CD8-positive, alpha-beta T cell (primary cell): ENCODE measurements at regions of chr19 and their contacts with region 1.

Region 1: DNA sequence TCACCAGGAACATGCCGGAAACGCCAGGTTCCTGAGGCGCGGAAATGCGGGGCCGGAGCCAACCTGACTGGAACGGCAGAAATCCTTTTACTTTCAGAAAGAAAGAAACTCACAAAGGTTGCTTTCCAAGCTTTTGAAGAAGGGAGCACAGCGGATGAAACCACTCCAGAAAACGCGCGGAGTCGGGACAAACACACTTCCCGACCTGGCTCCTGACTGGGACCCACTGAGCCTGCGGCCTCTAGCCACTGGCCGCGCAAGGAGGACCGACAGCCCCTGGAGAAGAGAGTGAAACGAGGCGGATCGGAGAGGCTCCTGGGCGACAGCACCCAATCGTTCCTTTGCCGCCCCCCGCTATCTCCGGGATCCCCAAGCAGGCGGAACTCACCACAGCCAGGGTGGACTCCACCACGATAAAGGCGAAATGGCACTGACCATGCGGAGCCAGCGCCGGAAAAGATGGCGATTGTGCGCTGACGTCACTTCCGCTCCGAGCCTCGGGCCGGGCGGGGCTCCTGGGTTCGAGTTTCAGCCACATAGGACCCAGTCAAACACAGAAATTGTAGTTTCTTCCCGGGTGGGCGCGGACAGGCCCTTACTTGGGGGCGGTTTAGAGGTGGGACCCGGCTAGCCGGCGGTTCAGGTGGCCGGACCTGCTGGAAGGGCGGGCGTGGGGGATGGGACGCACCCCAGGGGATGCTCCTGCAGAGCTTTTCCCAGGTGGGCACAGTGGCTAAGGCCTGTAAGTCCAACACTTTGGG is at the start of gene ZNF121:
- DNase-seq: peak; percentile 57 to 89 (median 81)
- ATAC-seq: peak; percentile 75
- H3K4me3 ChIP-seq: peak within 1 kb of the TSS; percentile 95 to 98
- H3K4me3 Mint-ChIP-seq: peak within 1 kb of the TSS; percentile 95
- H3K27ac ChIP-seq: peak within 1 kb of the TSS; percentile 96 to 97
- H3K27ac Mint-ChIP-seq: peak within 1 kb of the TSS; percentile 95
- H3K4me1 ChIP-seq: peaks cover 21% of the 10 kb centered on the region
- H3K4me1 Mint-ChIP-seq: peaks cover 39% of the 10 kb centered on the region
- H3K27me3 ChIP-seq: no peaks in the 10 kb centered on the region
- H3K27me3 Mint-ChIP-seq: peaks cover 2% of the 10 kb centered on the region
- CTCF ChIP-seq: no peak
- total RNA-seq, gene ZNF121: 40.6 to 43.2 TPM

Region 2: GRCh38 chr19:8897106-8897505 is 687.1 kb before region 1 on chr19:
- CTCF ChIA-PET with region 1: no interaction called
- POLR2A ChIA-PET with region 1: no interaction called
- intact Hi-C with region 1: no loop called
- DNase-seq: no peak
- ATAC-seq: no peak
- H3K4me3 ChIP-seq: no peak overlapping the region
- H3K4me3 Mint-ChIP-seq: no peak overlapping the region
- H3K27ac ChIP-seq: no peak overlapping the region
- H3K27ac Mint-ChIP-seq: no peak overlapping the region
- H3K4me1 ChIP-seq: no peaks in the 10 kb centered on the region
- H3K4me1 Mint-ChIP-seq: no peaks in the 10 kb centered on the region
- H3K27me3 ChIP-seq: no peaks in the 10 kb centered on the region
- H3K27me3 Mint-ChIP-seq: no peaks in the 10 kb centered on the region
- CTCF ChIP-seq: no peak

Region 3: DNA sequence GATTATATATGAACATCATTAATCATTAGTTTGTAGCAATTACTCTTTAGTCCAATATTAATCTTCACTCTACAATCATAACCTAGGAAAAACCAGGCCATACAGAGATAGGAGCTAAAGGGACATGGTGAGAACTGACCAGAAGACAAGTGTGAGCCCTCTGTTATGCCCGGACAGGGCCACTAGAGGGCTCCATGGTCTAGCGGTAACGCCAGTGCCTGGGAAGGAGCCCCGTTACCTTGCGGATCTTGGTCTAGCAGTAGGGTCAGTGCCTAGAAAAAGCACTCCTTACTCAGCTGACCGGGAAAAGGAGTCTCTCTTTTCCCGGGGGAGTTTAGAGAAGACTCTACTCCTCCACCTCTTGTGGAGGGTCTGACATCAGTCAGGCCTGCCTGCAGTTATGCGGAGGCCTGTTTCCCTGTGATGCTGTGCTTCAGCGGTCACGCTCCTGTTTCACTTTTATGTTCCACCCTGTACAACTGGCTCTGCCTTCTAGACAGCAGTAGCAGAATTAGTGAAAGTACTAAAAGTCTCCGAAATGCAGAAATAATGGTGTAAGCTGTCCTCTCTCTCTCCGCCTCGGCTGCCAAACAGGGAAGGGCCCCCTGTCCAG is 378.6 kb before region 1 on chr19:
- CTCF ChIA-PET with region 1: interaction called, 5 read pairs
- POLR2A ChIA-PET with region 1: no interaction called
- intact Hi-C with region 1: loop called (anchors 1 to 5 kb)
- DNase-seq: peak; percentile 32 to 79 (median 65)
- ATAC-seq: peak; percentile 71
- H3K4me3 ChIP-seq: peak overlapping the region in 1 of 2 experiments; percentile 32
- H3K4me3 Mint-ChIP-seq: peak overlapping the region; percentile 60
- H3K27ac ChIP-seq: no peak overlapping the region
- H3K27ac Mint-ChIP-seq: no peak overlapping the region
- H3K4me1 ChIP-seq: no peaks in the 10 kb centered on the region
- H3K4me1 Mint-ChIP-seq: peaks cover 6% of the 10 kb centered on the region
- H3K27me3 ChIP-seq: no peaks in the 10 kb centered on the region
- H3K27me3 Mint-ChIP-seq: peaks cover 8% of the 10 kb centered on the region
- CTCF ChIP-seq: peak; percentile 98

Region 4: DNA sequence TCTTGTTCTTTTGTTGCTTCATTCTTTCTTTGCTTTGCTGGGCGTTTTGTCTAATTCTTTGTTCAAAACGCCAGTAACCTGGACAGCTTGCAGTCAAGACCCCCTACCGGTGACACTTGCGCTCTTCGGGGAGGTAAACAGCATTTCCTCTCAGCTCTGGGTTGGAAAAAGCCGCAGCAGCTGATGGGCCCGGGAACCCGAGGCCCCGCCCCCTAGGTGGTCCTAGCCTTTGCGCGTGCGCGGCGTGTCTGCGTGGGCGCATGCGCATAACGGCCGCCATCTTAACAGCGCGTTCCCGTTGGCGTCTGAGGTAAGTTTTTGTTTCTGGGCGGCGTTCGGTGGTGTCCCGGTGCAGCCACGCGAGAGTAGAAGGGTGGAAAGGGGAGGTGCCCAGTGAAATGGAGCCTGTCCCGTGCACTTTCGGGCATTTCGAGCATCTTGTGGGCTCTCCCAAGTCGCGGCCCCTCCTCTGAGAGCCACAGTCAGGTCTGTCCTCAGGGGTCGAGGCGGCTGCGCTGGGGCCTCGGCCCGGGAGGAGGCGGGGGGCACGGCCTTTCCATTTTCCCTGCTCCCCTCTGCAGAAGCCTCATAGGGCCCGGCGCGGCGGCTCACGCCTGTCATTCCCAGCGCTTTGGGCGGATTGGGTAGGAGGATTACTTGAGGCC is 260.2 kb before region 1 on chr19 and contains the start of gene ZNF559:
- CTCF ChIA-PET with region 1: no interaction called
- POLR2A ChIA-PET with region 1: interaction called, 6 read pairs
- intact Hi-C with region 1: loop called in 1 of 2 experiments (anchors 1 kb)
- DNase-seq: peak; percentile 95 to 99 (median 98)
- ATAC-seq: peak; percentile 95
- H3K4me3 ChIP-seq: peak within 1 kb of the TSS; percentile 75 to 78
- H3K4me3 Mint-ChIP-seq: peak within 1 kb of the TSS; percentile 88
- H3K27ac ChIP-seq: peak within 1 kb of the TSS; percentile 62 to 83
- H3K27ac Mint-ChIP-seq: peak within 1 kb of the TSS; percentile 87
- H3K4me1 ChIP-seq: peaks cover 12% of the 10 kb centered on the region
- H3K4me1 Mint-ChIP-seq: peaks cover 38% of the 10 kb centered on the region
- H3K27me3 ChIP-seq: no peaks in the 10 kb centered on the region
- H3K27me3 Mint-ChIP-seq: no peaks in the 10 kb centered on the region
- CTCF ChIP-seq: peak; percentile 39
- total RNA-seq, gene ZNF559: 4.0 to 4.5 TPM

Region 5: DNA sequence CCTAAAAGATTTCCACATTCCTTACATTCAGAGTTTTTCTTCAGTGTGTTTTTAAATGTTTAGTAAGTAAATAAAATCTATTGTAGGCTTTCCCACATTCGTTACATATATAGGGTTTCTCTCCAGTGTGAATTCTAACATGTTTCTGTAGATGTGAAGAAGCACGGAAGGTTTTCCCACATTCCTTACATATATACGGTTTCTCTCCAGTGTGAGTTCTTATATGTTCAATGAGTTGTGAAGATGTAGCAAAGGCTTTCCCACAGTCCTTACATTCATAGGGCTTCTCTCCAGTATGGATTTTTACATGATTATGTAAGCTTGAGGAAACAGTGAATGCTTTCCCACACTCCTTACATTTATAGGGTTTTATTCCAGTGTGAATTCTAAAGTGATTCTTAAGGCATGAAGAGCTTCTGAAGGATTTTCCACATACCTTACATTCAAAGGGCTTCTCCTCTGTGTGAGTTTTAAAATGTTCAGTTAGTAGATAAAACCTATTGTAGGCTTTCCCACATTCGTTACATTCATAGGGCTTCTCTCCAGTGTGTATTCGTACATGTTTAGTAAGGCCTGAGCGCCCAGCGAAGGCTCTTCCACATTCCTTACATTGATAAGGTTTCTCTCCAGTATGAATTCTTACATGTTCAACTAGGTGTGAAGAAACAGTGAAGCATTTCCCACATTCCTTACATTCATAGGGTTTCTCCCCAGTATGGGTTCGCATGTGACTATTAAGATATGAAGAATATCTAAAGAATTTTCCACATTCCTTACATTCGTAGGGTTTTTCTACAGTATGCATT is 18.1 kb before region 1 on chr19:
- CTCF ChIA-PET with region 1: no interaction called
- POLR2A ChIA-PET with region 1: interaction called, 10 read pairs
- intact Hi-C with region 1: no loop called
- DNase-seq: no peak
- ATAC-seq: no peak
- H3K4me3 ChIP-seq: no peak overlapping the region
- H3K4me3 Mint-ChIP-seq: no peak overlapping the region
- H3K27ac ChIP-seq: no peak overlapping the region
- H3K27ac Mint-ChIP-seq: no peak overlapping the region
- H3K4me1 ChIP-seq: no peaks in the 10 kb centered on the region
- H3K4me1 Mint-ChIP-seq: peaks cover under 1% of the 10 kb centered on the region
- H3K27me3 ChIP-seq: no peaks in the 10 kb centered on the region
- H3K27me3 Mint-ChIP-seq: no peaks in the 10 kb centered on the region
- CTCF ChIP-seq: no peak

Region 6: DNA sequence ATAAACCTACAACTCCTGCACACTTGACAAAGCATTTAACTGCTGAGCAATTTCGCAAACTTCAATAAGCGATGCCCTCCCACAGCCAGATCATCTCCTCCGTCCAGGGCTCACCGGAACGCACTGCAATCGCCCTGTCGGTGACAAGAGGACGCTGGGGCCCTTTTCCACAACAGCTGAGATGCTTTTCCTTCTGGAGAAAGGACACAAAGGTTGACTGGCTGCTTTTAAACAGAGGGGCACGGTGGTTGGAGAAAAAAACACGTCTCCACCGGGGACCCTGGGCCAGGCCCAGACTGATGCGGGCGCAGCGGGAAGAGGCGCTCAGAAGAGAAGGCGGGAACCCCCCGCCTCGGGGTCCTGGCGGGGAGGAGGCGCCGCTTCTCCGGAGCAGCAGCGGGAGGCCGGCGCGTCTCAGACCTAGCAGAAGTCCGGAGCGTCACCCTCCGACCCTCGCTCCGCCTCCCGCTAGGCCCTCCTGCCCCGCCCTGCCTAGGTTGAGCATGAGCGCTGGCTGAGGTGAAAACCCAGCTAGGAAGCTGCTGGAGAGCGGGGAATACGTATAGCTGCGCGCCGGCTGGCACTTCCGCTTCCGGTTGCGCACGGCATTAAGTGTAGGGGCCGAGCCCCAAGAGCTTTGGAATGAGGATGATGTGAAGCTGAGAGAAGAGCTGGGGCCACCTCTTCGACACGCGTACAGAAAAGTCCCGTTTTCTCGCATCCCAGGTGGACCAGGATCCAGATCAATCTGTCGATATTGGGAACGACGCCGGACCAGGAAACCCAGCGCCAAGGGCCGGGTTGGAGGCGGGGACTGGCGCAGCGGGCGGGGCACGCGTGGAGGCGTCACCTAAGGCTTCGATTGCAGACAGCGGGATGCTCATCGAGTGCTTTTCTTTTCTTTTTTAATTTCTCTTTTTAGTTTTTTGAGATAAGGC is 184.2 kb after region 1 on chr19 and contains the start of gene ZNF846:
- CTCF ChIA-PET with region 1: interaction called, 3 read pairs
- POLR2A ChIA-PET with region 1: no interaction called
- intact Hi-C with region 1: loop called in 1 of 2 experiments (anchors 1 kb)
- DNase-seq: peak; percentile 83 to 96 (median 93)
- ATAC-seq: peak; percentile 95
- H3K4me3 ChIP-seq: peak within 1 kb of the TSS; percentile 94 to 96
- H3K4me3 Mint-ChIP-seq: peak within 1 kb of the TSS; percentile 97
- H3K27ac ChIP-seq: peak within 1 kb of the TSS; percentile 87 to 99
- H3K27ac Mint-ChIP-seq: peak within 1 kb of the TSS; percentile 99
- H3K4me1 ChIP-seq: peaks cover 8% of the 10 kb centered on the region
- H3K4me1 Mint-ChIP-seq: peaks cover 16% of the 10 kb centered on the region
- H3K27me3 ChIP-seq: no peaks in the 10 kb centered on the region
- H3K27me3 Mint-ChIP-seq: no peaks in the 10 kb centered on the region
- CTCF ChIP-seq: no peak
- total RNA-seq, gene ZNF846: 6.4 to 8.2 TPM